ENCODE measurements at regions of chr15 and their contacts with region 1.

Region 1: GRCh38 chr15:90071208-90071807 is 31.0 kb downstream of the IDH2 start:
- DNase-seq: peak; percentile 70 to 86 (median 79)
- H3K4me3 ChIP-seq: no peak overlapping the region
- H3K4me3 Mint-ChIP-seq: no peak overlapping the region
- H3K27ac ChIP-seq: no peak overlapping the region
- H3K27ac Mint-ChIP-seq: peak overlapping the region in 5 of 7 donors; percentile 3 to 83 (median 68)
- H3K4me1 ChIP-seq: peaks cover 3% of the 10 kb centered on the region
- H3K4me1 Mint-ChIP-seq: peaks cover 2 to 12% (median 9%) of the 10 kb centered on the region in 4 donors
- H3K27me3 ChIP-seq: no peaks in the 10 kb centered on the region
- H3K27me3 Mint-ChIP-seq: no peaks in the 10 kb centered on the region

Region 2: DNA sequence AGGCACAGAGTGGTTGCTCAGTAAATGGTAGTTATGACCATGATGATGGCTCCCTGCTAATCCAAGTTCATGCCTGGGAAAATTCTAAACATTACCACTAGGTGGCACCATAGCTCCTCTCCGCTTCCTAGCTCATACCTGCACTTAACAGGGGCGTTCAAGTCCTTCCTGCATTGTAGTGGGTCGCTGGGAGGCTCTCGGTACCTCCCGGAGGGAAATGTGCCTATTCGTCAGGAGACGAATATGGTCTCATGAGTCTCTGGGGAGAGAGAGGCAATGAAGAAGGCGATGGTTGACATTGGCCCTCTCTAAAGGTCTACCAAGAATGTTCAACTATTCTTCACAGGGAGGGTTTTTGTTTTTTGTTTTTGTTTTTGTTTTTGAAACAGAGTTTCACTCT is 331.2 kb before region 1 on chr15:
- CTCF ChIA-PET with region 1: interaction called, 8 read pairs
- POLR2A ChIA-PET with region 1: no interaction called
- intact Hi-C with region 1: loop called (anchors 1 kb)
- DNase-seq: peak; percentile 50 to 67 (median 64)
- H3K4me3 ChIP-seq: no peak overlapping the region
- H3K4me3 Mint-ChIP-seq: no peak overlapping the region
- H3K27ac ChIP-seq: no peak overlapping the region
- H3K27ac Mint-ChIP-seq: no peak overlapping the region
- H3K4me1 ChIP-seq: no peaks in the 10 kb centered on the region
- H3K4me1 Mint-ChIP-seq: peaks cover 0 to 7% (median 2%) of the 10 kb centered on the region in 4 donors
- H3K27me3 ChIP-seq: no peaks in the 10 kb centered on the region
- H3K27me3 Mint-ChIP-seq: peaks cover 9 to 12% of the 10 kb centered on the region in 2 donors

Region 3: DNA sequence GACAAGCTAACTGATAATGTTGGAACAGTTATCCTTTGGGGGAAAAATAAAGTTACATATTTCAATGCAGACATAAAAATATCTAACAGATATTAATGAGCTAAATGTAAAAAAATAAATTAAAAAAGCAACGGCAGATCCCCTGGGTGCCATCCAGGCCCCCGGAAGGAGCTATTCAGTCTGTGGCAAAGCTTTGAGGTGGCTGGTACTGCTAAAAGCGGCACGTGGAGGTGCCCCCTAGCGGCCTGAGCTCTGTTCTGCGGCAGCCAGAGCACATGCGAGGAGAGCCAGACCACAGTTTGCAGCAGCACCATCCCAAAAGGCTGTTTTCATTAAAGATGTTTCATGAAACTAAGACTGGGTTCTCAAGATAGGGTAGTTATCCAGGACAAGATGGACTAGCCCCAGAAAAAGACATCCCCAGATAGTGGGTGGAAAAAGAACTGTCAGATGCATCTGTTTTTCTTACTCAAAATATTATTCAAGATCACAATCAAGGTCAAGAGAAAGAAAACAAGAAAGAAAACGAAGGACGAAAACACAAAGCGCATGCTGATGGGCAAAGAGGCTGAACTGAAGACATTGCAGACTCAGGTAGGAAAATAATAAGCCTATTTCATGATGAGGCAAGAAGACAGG is 196.3 kb before region 1 on chr15:
- CTCF ChIA-PET with region 1: interaction called, 22 read pairs
- POLR2A ChIA-PET with region 1: no interaction called
- intact Hi-C with region 1: loop called (anchors 1 kb)
- DNase-seq: peak; percentile 67 to 75 (median 74)
- H3K4me3 ChIP-seq: no peak overlapping the region
- H3K4me3 Mint-ChIP-seq: no peak overlapping the region
- H3K27ac ChIP-seq: no peak overlapping the region
- H3K27ac Mint-ChIP-seq: peak overlapping the region in 6 of 7 donors; percentile 1 to 59 (median 29)
- H3K4me1 ChIP-seq: no peaks in the 10 kb centered on the region
- H3K4me1 Mint-ChIP-seq: peaks cover 4 to 7% (median 5%) of the 10 kb centered on the region in 4 donors
- H3K27me3 ChIP-seq: no peaks in the 10 kb centered on the region
- H3K27me3 Mint-ChIP-seq: no peaks in the 10 kb centered on the region

Region 4: GRCh38 chr15:89893696-89894455 is 177.4 kb before region 1 on chr15 and contains the start of gene AP3S2:
- CTCF ChIA-PET with region 1: interaction called, 95 read pairs
- POLR2A ChIA-PET with region 1: interaction called, 20 read pairs
- intact Hi-C with region 1: loop called (anchors 1 kb)
- DNase-seq: peak; percentile 85 to 90 (median 86)
- H3K4me3 ChIP-seq: peak within 1 kb of the TSS; percentile 65 to 70
- H3K4me3 Mint-ChIP-seq: peak within 1 kb of the TSS; percentile 93 to 99 (median 98)
- H3K27ac ChIP-seq: peak within 1 kb of the TSS; percentile 84
- H3K27ac Mint-ChIP-seq: peak within 1 kb of the TSS; percentile 95 to 98 (median 97)
- H3K4me1 ChIP-seq: peaks cover 34% of the 10 kb centered on the region
- H3K4me1 Mint-ChIP-seq: peaks cover 20 to 46% (median 37%) of the 10 kb centered on the region in 4 donors
- H3K27me3 ChIP-seq: no peaks in the 10 kb centered on the region
- H3K27me3 Mint-ChIP-seq: no peaks in the 10 kb centered on the region
- total RNA-seq, gene AP3S2: 34.3 to 36.6 TPM

Region 5: DNA sequence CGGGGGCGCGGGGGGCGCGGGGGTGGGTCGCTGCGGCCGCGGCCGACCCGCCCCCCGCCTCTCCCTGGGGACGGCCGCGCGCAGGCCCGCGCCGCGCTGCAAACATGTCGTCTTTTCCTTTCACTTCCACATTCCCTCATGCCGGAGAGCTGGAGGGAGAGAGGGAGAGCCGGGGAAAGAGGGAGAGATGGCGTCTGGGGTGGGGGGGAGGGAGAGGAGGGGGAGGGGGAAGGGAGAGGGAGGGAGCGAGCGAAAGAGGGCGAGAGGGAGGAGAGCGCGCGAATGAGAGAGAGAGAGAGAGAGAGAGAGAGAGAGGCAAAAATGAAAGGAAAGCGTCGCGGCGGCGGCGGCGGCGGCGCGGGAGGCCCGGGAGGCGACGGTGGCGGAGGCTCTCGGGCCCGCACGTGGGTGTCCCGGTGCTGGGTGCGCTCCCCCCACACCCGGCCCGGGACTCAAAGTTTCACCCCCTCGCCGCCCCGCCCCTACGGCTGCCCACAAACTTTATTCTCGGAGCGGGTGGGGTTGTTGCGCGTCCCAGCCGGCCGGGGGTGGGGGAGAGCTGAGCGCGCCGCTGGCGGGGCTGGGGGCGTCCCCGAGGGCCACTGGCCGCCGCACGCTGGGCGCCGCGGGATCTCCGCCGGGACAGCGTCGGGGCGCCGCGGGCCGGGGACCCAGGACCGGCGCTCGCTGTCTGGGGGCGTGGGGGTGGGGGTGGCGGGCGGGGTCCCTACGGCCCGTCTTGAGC is 69.5 kb before region 1 on chr15:
- CTCF ChIA-PET with region 1: interaction called, 19 read pairs
- POLR2A ChIA-PET with region 1: interaction called, 4 read pairs
- intact Hi-C with region 1: loop called (anchors 2 kb)
- DNase-seq: peak; percentile 71 to 76 (median 76)
- H3K4me3 ChIP-seq: peak overlapping the region in 1 of 2 donors; percentile 47
- H3K4me3 Mint-ChIP-seq: peak overlapping the region; percentile 82 to 96 (median 89)
- H3K27ac ChIP-seq: peak overlapping the region; percentile 61
- H3K27ac Mint-ChIP-seq: peak overlapping the region; percentile 86 to 98 (median 94)
- H3K4me1 ChIP-seq: peaks cover 66% of the 10 kb centered on the region
- H3K4me1 Mint-ChIP-seq: peaks cover 30 to 70% (median 53%) of the 10 kb centered on the region in 4 donors
- H3K27me3 ChIP-seq: no peaks in the 10 kb centered on the region
- H3K27me3 Mint-ChIP-seq: no peaks in the 10 kb centered on the region

Region 6: GRCh38 chr15:90031231-90031791 is 40.0 kb before region 1 on chr15:
- CTCF ChIA-PET with region 1: interaction called, 19 read pairs
- POLR2A ChIA-PET with region 1: interaction called, 3 read pairs
- intact Hi-C with region 1: loop called (anchors 2 kb)
- DNase-seq: peak in 3 of 5 donors; percentile 16 to 32 (median 25)
- H3K4me3 ChIP-seq: no peak overlapping the region
- H3K4me3 Mint-ChIP-seq: peak overlapping the region in 7 of 8 donors; percentile 39 to 80 (median 63)
- H3K27ac ChIP-seq: no peak overlapping the region
- H3K27ac Mint-ChIP-seq: peak overlapping the region; percentile 61 to 85 (median 76)
- H3K4me1 ChIP-seq: peaks cover 52% of the 10 kb centered on the region
- H3K4me1 Mint-ChIP-seq: peaks cover 33 to 59% (median 48%) of the 10 kb centered on the region in 4 donors
- H3K27me3 ChIP-seq: no peaks in the 10 kb centered on the region
- H3K27me3 Mint-ChIP-seq: no peaks in the 10 kb centered on the region

Region 7: GRCh38 chr15:90086868-90087268 is 15.6 kb after region 1 on chr15:
- CTCF ChIA-PET with region 1: interaction called, 29 read pairs
- POLR2A ChIA-PET with region 1: no interaction called
- intact Hi-C with region 1: no loop called
- DNase-seq: peak in 2 of 5 donors; percentile 45 to 50
- H3K4me3 ChIP-seq: no peak overlapping the region
- H3K4me3 Mint-ChIP-seq: peak overlapping the region in 1 of 8 donors; percentile 2
- H3K27ac ChIP-seq: no peak overlapping the region
- H3K27ac Mint-ChIP-seq: peak overlapping the region; percentile 56 to 86 (median 72)
- H3K4me1 ChIP-seq: no peaks in the 10 kb centered on the region
- H3K4me1 Mint-ChIP-seq: peaks cover 6 to 24% (median 7%) of the 10 kb centered on the region in 4 donors
- H3K27me3 ChIP-seq: no peaks in the 10 kb centered on the region
- H3K27me3 Mint-ChIP-seq: no peaks in the 10 kb centered on the region

Region 8: GRCh38 chr15:90268415-90268814 is 197.1 kb after region 1 on chr15:
- CTCF ChIA-PET with region 1: no interaction called
- POLR2A ChIA-PET with region 1: no interaction called
- intact Hi-C with region 1: no loop called
- DNase-seq: no peak
- H3K4me3 ChIP-seq: no peak overlapping the region
- H3K4me3 Mint-ChIP-seq: peak overlapping the region; percentile 57 to 99 (median 74)
- H3K27ac ChIP-seq: no peak overlapping the region
- H3K27ac Mint-ChIP-seq: peak overlapping the region; percentile 52 to 99 (median 75)
- H3K4me1 ChIP-seq: peaks cover 61% of the 10 kb centered on the region
- H3K4me1 Mint-ChIP-seq: peaks cover 37 to 88% (median 56%) of the 10 kb centered on the region in 4 donors
- H3K27me3 ChIP-seq: no peaks in the 10 kb centered on the region
- H3K27me3 Mint-ChIP-seq: no peaks in the 10 kb centered on the region